Endothelial cell of umbilical vein (primary cell): ENCODE measurements at regions of chr6 and their contacts with region 1.

Region 1: DNA sequence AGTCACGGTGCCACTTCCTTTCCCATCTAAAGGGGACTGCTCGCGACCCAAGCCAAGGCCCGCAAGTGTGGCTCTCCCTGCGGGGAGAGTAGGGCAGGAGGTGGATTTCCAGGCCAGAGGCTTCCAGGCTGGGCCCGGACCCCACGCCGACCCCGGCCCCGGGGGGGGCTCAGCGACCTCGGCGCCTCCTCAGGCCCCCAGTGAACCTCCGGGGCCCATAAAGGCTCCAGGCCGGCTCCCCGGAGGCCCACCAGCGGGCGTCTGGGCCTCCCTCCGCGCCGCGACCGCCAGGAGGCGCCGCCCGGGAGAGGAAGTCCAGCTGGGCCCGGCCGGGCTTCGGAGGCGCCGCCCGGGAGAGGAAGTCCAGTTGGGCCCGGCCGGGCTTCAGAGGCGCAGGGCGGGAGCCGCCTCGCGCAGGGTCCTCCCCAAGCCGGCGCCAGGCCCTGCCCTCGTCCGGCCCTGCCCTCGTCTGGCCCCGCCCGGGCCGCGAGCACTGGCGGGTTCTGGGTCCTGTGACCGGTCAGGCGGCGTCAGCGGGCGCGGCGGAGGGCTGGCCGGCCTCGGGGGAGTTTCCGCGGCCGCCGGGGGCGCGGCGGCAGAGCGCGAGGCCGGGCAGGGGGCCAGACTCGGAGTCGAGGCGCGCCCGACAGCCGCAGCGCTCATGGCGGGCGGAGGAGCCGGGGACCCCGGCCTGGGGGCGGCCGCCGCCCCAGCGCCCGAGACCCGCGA is at the start of gene RAB32:
- DNase-seq: peak; percentile 92
- H3K4me3 ChIP-seq: peak within 1 kb of the TSS; percentile 78 to 95 (median 87)
- H3K27ac ChIP-seq: peak within 1 kb of the TSS; percentile 58
- H3K4me1 ChIP-seq: peaks cover 29% of the 10 kb centered on the region
- H3K27me3 ChIP-seq: no peaks in the 10 kb centered on the region
- CTCF ChIP-seq: peak; percentile 62 to 69
- POLR2A ChIP-seq: peak; percentile 69
- total RNA-seq, gene RAB32: 65.6 and 78.3 TPM in 2 replicates

Region 2: DNA sequence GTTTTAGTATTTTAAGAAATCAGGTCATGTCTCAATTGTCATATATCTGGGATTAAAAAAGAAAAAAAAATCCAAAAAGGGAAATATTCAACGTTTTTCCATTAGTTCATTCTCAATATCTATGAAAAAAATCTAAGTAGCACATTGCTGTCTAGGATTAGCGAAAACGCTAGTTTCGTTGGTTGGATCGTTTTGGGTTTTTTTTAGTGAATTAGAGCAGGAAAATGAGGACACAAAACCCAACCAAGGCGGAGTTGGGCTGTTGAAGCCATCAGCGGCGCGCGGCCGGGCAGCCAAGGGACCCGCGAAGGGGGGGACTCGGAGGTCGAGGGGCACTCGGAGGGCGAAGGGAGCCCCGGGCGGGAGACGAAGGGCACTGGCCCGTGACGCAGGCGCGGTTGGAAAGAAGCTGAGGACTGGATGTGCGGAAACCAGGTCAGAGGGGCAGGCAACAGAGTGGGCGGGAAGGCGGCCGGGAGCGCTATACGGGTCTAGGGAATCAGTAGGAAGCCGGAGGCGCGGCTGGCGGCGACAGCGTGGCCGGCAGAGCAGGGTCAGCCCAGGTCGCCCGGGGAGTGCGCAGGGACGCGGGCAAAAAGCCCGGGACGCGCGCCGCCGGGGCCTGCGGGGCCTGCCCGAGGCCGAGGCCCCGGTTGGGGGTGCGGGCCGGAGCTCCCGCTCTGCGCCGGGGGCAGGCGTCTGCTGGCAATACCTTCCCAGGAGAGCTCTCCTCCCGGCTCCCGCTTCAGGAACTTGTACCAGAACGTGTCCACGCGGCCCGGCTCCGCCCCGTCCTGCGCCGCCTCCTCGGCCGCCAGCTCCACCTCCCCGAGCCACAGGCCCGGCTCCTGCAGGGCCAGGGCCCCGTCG is 808.7 kb before region 1 on chr6:
- CTCF ChIA-PET with region 1: no interaction called
- POLR2A ChIA-PET with region 1: no interaction called
- dilution Hi-C with region 1: no loop called
- intact Hi-C with region 1: loop called (anchors 10 kb)
- DNase-seq: peak; percentile 89
- H3K4me3 ChIP-seq: peak overlapping the region; percentile 51 to 60 (median 56)
- H3K27ac ChIP-seq: peak overlapping the region; percentile 87
- H3K4me1 ChIP-seq: peaks cover 18% of the 10 kb centered on the region
- H3K27me3 ChIP-seq: no peaks in the 10 kb centered on the region
- CTCF ChIP-seq: no peak
- POLR2A ChIP-seq: peak; percentile 91

Region 3: GRCh38 chr6:145929037-145929633 is 614.2 kb before region 1 on chr6:
- CTCF ChIA-PET with region 1: interaction called, 5 read pairs
- POLR2A ChIA-PET with region 1: no interaction called
- dilution Hi-C with region 1: no loop called
- intact Hi-C with region 1: loop called (anchors 5 kb)
- DNase-seq: peak; percentile 53
- H3K4me3 ChIP-seq: no peak overlapping the region
- H3K27ac ChIP-seq: no peak overlapping the region
- H3K4me1 ChIP-seq: no peaks in the 10 kb centered on the region
- H3K27me3 ChIP-seq: no peaks in the 10 kb centered on the region
- CTCF ChIP-seq: peak; percentile 38 to 50
- POLR2A ChIP-seq: no peak

Region 4: DNA sequence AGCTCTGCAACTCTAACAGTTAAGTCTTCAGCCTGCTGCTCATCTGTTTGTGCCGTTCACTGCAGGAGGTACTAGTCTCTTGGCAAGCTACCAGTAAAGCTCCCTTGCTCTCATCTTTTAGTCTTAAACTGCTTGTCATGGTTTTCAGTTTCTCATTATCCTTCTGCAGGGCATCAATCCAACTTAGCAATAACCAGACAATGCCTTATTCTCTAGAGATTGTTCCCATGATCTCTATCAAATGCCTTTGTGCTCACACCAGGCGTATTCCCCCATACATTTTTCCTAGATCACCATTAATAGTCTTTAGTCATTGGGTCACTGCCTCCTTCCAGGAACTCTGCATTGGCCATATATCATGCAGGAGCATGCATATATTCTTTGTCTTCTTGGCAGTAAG is 343.2 kb before region 1 on chr6:
- CTCF ChIA-PET with region 1: no interaction called
- POLR2A ChIA-PET with region 1: no interaction called
- dilution Hi-C with region 1: no loop called
- intact Hi-C with region 1: no loop called
- DNase-seq: no peak
- H3K4me3 ChIP-seq: no peak overlapping the region
- H3K27ac ChIP-seq: no peak overlapping the region
- H3K4me1 ChIP-seq: no peaks in the 10 kb centered on the region
- H3K27me3 ChIP-seq: no peaks in the 10 kb centered on the region
- CTCF ChIP-seq: no peak
- POLR2A ChIP-seq: no peak

Region 5: GRCh38 chr6:146289816-146290588 is 253.4 kb before region 1 on chr6:
- CTCF ChIA-PET with region 1: interaction called, 3 read pairs
- POLR2A ChIA-PET with region 1: no interaction called
- dilution Hi-C with region 1: no loop called
- intact Hi-C with region 1: loop called (anchors 2 kb)
- DNase-seq: peak; percentile 79
- H3K4me3 ChIP-seq: no peak overlapping the region
- H3K27ac ChIP-seq: peak overlapping the region; percentile 64
- H3K4me1 ChIP-seq: peaks cover 15% of the 10 kb centered on the region
- H3K27me3 ChIP-seq: no peaks in the 10 kb centered on the region
- CTCF ChIP-seq: no peak
- POLR2A ChIP-seq: no peak

Region 6: DNA sequence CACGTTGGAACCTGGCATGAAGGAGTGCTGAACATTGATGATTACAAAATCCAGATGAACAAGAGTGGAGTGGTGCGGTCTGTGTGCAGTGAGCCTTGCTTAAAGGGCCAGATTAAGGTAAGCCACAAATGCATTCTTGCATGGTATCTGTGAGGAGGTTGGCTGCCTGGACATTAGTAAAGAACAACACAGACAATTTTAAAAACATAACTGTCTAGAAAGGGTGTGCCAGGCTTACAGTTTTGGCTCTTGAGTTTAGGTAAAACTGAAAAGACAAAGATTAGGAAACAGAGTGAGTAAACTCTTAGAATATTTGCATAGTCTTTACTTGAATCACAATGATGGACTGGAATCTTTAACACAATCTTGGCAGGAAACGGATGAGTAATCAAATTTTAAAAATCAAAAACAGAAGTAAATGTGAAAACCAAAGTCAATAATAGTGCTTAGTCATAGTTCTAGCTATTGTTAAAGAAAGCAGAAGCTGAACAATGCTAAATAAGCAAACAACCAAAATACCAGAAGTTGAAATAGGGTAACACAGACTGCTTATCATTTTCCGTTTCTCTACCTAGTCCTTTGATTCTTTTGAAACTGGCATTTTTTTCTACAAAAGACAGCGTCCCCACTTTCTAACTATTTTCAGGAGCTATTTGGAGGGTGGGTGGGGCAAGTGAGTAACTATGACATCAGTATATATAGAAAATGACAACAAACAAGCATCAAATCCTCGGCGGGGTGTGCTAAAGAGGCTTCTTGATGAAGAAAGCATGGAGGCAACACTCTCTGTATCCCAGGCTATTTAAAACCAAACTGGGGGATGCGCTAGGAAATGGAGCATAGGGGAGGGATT is 185.6 kb before region 1 on chr6:
- CTCF ChIA-PET with region 1: no interaction called
- POLR2A ChIA-PET with region 1: no interaction called
- dilution Hi-C with region 1: no loop called
- intact Hi-C with region 1: loop called (anchors 1 kb)
- DNase-seq: peak; percentile 91
- H3K4me3 ChIP-seq: peak overlapping the region in 1 of 3 experiments; percentile 28
- H3K27ac ChIP-seq: peak overlapping the region; percentile 99
- H3K4me1 ChIP-seq: peaks cover 54% of the 10 kb centered on the region
- H3K27me3 ChIP-seq: no peaks in the 10 kb centered on the region
- CTCF ChIP-seq: no peak
- POLR2A ChIP-seq: no peak

Region 7: DNA sequence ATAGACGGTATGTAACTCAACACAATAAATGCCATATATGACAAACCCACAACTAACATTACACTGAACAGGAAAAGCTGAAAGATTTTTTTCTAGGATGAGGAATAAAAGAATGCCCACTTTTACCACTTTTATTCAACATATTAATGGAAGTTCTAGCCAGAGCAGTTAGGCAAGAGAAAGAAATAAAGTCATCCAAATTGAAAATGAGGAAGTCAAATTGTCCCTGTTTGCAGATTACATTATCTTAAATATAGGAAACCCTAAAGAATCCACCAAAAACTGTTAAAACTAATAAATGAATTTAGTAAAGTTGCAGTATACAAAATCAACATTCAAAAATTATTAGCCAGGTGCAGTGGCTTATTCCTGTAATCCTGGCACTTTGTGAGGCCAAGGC is 30.8 kb after region 1 on chr6:
- CTCF ChIA-PET with region 1: no interaction called
- POLR2A ChIA-PET with region 1: no interaction called
- dilution Hi-C with region 1: no loop called
- intact Hi-C with region 1: no loop called
- DNase-seq: no peak
- H3K4me3 ChIP-seq: no peak overlapping the region
- H3K27ac ChIP-seq: no peak overlapping the region
- H3K4me1 ChIP-seq: no peaks in the 10 kb centered on the region
- H3K27me3 ChIP-seq: no peaks in the 10 kb centered on the region
- CTCF ChIP-seq: no peak
- POLR2A ChIP-seq: no peak

Region 8: DNA sequence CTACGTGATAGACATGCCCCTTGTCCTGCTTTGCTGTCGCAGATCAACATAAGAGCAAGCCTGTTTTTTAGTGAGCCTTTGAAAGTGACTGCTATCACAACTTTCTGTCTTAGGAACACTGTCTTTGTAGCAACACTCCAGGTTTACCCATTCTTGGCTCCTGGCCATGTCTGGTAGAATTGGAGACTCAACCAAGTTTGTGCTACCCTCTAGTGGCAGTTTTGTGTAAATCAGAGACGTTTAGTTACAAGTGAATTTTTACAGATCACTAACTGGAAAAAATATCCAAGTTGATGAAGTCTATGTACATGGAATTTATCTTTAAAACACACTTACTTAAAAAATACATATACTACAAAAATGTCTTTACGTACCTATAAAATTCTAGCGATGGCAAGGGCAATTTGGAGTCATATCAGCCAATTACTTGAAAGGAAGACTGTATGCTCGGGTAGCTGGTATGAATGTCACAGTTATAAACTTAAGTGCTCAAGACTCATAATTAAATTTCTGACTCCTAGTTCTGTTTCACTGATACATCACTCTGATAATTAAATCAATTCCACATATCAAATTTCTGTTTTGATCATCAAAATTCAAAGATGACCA is 156.8 kb after region 1 on chr6:
- CTCF ChIA-PET with region 1: interaction called, 10 read pairs
- POLR2A ChIA-PET with region 1: no interaction called
- dilution Hi-C with region 1: no loop called
- intact Hi-C with region 1: loop called (anchors 1 kb)
- DNase-seq: peak; percentile 78
- H3K4me3 ChIP-seq: no peak overlapping the region
- H3K27ac ChIP-seq: no peak overlapping the region
- H3K4me1 ChIP-seq: no peaks in the 10 kb centered on the region
- H3K27me3 ChIP-seq: peaks cover 0 to 3% of the 10 kb centered on the region in 2 experiments
- CTCF ChIP-seq: peak; percentile 44 to 52
- POLR2A ChIP-seq: no peak

Region 9: GRCh38 chr6:146913842-146914488 is 370.6 kb after region 1 on chr6:
- CTCF ChIA-PET with region 1: no interaction called
- POLR2A ChIA-PET with region 1: no interaction called
- dilution Hi-C with region 1: no loop called
- intact Hi-C with region 1: loop called (anchors 10 kb)
- DNase-seq: peak; percentile 98
- H3K4me3 ChIP-seq: peak overlapping the region in 2 of 3 experiments; percentile 10 to 45
- H3K27ac ChIP-seq: peak overlapping the region; percentile 99
- H3K4me1 ChIP-seq: peaks cover 39% of the 10 kb centered on the region
- H3K27me3 ChIP-seq: no peaks in the 10 kb centered on the region
- CTCF ChIP-seq: no peak
- POLR2A ChIP-seq: no peak